CD4-positive, alpha-beta memory T cell (primary cell): ENCODE measurements at regions of chr2 and their contacts with region 1.

Region 1: GRCh38 chr2:181466661-181467576 is 9.7 kb downstream of the ITGA4 start:
- DNase-seq: peak; percentile 65 to 75 (median 68)
- H3K4me3 ChIP-seq: no peak overlapping the region
- H3K4me3 Mint-ChIP-seq: peak overlapping the region; percentile 55 to 77 (median 64)
- H3K27ac ChIP-seq: peak overlapping the region; percentile 56
- H3K27ac Mint-ChIP-seq: peak overlapping the region; percentile 87 to 96 (median 93)
- H3K4me1 ChIP-seq: peaks cover 86% of the 10 kb centered on the region
- H3K4me1 Mint-ChIP-seq: peaks cover 66 to 91% (median 71%) of the 10 kb centered on the region in 4 donors
- H3K27me3 ChIP-seq: no peaks in the 10 kb centered on the region
- H3K27me3 Mint-ChIP-seq: no peaks in the 10 kb centered on the region

Region 2: GRCh38 chr2:180125245-180125962 is 1341.5 kb before region 1 on chr2:
- CTCF ChIA-PET with region 1: no interaction called
- POLR2A ChIA-PET with region 1: no interaction called
- intact Hi-C with region 1: loop called (anchors 1 kb)
- DNase-seq: peak; percentile 28 to 44 (median 38)
- H3K4me3 ChIP-seq: no peak overlapping the region
- H3K4me3 Mint-ChIP-seq: peak overlapping the region in 1 of 8 donors; percentile 29
- H3K27ac ChIP-seq: no peak overlapping the region
- H3K27ac Mint-ChIP-seq: no peak overlapping the region
- H3K4me1 ChIP-seq: no peaks in the 10 kb centered on the region
- H3K4me1 Mint-ChIP-seq: peaks cover 0 to 7% (median 4%) of the 10 kb centered on the region in 4 donors
- H3K27me3 ChIP-seq: no peaks in the 10 kb centered on the region
- H3K27me3 Mint-ChIP-seq: peaks cover 0 to 7% of the 10 kb centered on the region in 2 donors

Region 3: DNA sequence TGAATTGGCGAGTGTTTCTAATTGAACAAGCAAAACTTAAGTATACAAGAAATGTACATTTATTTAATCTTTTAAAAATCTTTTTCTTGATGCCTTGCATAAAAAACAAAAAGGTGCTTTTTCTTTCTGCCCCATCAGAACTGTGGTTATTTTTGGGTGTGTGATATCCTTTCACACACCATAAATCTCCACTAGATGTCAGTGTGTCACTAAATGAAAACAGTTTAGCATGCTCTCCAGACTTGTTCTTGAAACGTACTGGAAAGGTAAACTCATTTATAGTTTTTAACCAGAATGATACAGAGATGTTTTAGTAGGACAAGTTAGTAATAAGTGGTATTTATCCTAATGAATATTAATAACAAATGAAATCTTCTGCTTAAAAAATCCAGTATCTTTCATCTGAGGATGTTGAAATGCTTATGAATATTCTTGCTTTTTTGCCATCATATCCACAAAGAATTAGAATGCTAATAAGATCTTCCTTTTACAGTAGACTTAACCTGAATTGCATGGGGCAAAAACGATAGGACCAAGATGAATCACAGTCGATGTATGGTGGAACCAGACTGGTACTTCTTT is 389.7 kb before region 1 on chr2:
- CTCF ChIA-PET with region 1: interaction called, 3 read pairs
- POLR2A ChIA-PET with region 1: no interaction called
- intact Hi-C with region 1: loop called (anchors 1 kb)
- DNase-seq: peak; percentile 36 to 69 (median 65)
- H3K4me3 ChIP-seq: no peak overlapping the region
- H3K4me3 Mint-ChIP-seq: no peak overlapping the region
- H3K27ac ChIP-seq: no peak overlapping the region
- H3K27ac Mint-ChIP-seq: no peak overlapping the region
- H3K4me1 ChIP-seq: no peaks in the 10 kb centered on the region
- H3K4me1 Mint-ChIP-seq: peaks cover 0 to 3% (median 2%) of the 10 kb centered on the region in 4 donors
- H3K27me3 ChIP-seq: no peaks in the 10 kb centered on the region
- H3K27me3 Mint-ChIP-seq: peaks cover 0 to 2% of the 10 kb centered on the region in 2 donors

Region 4: DNA sequence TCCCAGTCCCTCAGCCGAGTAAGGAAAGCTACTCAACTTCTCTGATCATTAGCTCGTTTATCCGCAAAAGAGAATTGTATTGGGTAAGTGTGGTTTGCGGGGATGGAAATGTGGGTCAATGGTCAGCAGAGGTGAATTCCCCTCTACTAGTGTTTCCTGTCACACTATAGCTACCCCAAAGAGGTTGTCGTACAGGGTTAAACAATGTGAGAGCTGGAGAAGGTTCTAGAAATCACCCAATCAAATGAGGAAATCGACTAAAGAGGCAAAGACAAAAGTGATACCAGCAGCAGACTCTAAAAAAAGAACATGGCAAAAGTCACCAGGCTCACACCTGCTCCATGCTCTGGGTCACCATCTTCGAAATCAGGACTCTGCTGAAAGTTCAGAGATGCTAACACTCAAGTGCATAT is 154.4 kb before region 1 on chr2:
- CTCF ChIA-PET with region 1: interaction called, 11 read pairs
- POLR2A ChIA-PET with region 1: interaction called, 374 read pairs
- intact Hi-C with region 1: no loop called
- DNase-seq: peak; percentile 38 to 55 (median 45)
- H3K4me3 ChIP-seq: peak overlapping the region in 1 of 2 donors; percentile 27
- H3K4me3 Mint-ChIP-seq: peak overlapping the region; percentile 12 to 77 (median 71)
- H3K27ac ChIP-seq: peak overlapping the region; percentile 46
- H3K27ac Mint-ChIP-seq: peak overlapping the region; percentile 88 to 97 (median 95)
- H3K4me1 ChIP-seq: peaks cover 75% of the 10 kb centered on the region
- H3K4me1 Mint-ChIP-seq: peaks cover 34 to 56% (median 46%) of the 10 kb centered on the region in 4 donors
- H3K27me3 ChIP-seq: no peaks in the 10 kb centered on the region
- H3K27me3 Mint-ChIP-seq: no peaks in the 10 kb centered on the region

Region 5: DNA sequence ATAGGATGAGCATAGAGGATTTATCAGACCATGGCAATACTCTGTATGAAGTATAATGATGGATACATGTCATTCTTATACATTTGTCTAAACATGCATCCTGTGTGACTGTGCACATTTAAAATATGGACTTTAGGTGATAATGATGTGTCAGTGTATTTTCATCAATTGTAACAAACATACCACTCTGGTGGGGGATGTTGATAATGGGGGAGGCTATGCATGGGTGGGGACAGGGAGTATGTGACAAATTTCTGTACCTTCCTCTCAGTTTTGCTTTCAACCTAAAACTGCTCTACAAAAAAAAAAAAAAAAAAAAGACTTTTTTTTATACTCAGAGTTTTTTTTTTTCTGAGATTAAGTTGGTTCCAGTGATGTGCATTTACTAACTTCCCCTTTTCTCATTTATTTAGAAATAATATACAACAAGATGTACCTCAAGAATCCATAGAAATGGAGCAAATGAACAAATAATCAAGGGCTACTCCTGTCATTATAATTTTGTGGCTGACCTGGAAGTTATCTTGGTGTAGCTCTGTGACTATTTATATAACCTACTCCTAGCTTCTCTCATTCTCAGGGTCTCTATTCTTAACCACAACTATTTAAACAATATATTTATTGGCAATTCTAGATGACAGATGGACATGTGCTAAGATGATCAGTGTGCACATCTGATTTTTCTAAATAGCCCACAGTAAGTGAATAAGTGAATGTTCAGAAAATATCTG is 118.6 kb before region 1 on chr2:
- CTCF ChIA-PET with region 1: no interaction called
- POLR2A ChIA-PET with region 1: no interaction called
- intact Hi-C with region 1: no loop called
- DNase-seq: no peak
- H3K4me3 ChIP-seq: no peak overlapping the region
- H3K4me3 Mint-ChIP-seq: no peak overlapping the region
- H3K27ac ChIP-seq: no peak overlapping the region
- H3K27ac Mint-ChIP-seq: no peak overlapping the region
- H3K4me1 ChIP-seq: no peaks in the 10 kb centered on the region
- H3K4me1 Mint-ChIP-seq: peaks cover 0 to 5% (median 2%) of the 10 kb centered on the region in 4 donors
- H3K27me3 ChIP-seq: no peaks in the 10 kb centered on the region
- H3K27me3 Mint-ChIP-seq: no peaks in the 10 kb centered on the region

Region 6: GRCh38 chr2:181430406-181431118 is 36.4 kb before region 1 on chr2:
- CTCF ChIA-PET with region 1: interaction called, 35 read pairs
- POLR2A ChIA-PET with region 1: interaction called, 3 read pairs
- intact Hi-C with region 1: loop called (anchors 2 kb)
- DNase-seq: peak; percentile 34 to 53 (median 42)
- H3K4me3 ChIP-seq: no peak overlapping the region
- H3K4me3 Mint-ChIP-seq: peak overlapping the region in 1 of 8 donors; percentile 23
- H3K27ac ChIP-seq: no peak overlapping the region
- H3K27ac Mint-ChIP-seq: peak overlapping the region; percentile 38 to 85 (median 74)
- H3K4me1 ChIP-seq: peaks cover 13% of the 10 kb centered on the region
- H3K4me1 Mint-ChIP-seq: peaks cover 7 to 16% (median 12%) of the 10 kb centered on the region in 4 donors
- H3K27me3 ChIP-seq: no peaks in the 10 kb centered on the region
- H3K27me3 Mint-ChIP-seq: no peaks in the 10 kb centered on the region

Region 7: GRCh38 chr2:181438261-181438660 is 28.7 kb before region 1 on chr2:
- CTCF ChIA-PET with region 1: interaction called, 35 read pairs
- POLR2A ChIA-PET with region 1: no interaction called
- intact Hi-C with region 1: loop called (anchors 1 kb)
- DNase-seq: peak in 1 of 5 donors; percentile 34
- H3K4me3 ChIP-seq: no peak overlapping the region
- H3K4me3 Mint-ChIP-seq: no peak overlapping the region
- H3K27ac ChIP-seq: no peak overlapping the region
- H3K27ac Mint-ChIP-seq: no peak overlapping the region
- H3K4me1 ChIP-seq: peaks cover 10% of the 10 kb centered on the region
- H3K4me1 Mint-ChIP-seq: peaks cover 6 to 14% (median 11%) of the 10 kb centered on the region in 4 donors
- H3K27me3 ChIP-seq: no peaks in the 10 kb centered on the region
- H3K27me3 Mint-ChIP-seq: no peaks in the 10 kb centered on the region

Region 8: GRCh38 chr2:181715033-181715630 is 248.2 kb after region 1 on chr2:
- CTCF ChIA-PET with region 1: interaction called, 5 read pairs
- POLR2A ChIA-PET with region 1: no interaction called
- intact Hi-C with region 1: loop called (anchors 5 kb)
- DNase-seq: peak; percentile 51 to 68 (median 58)
- H3K4me3 ChIP-seq: no peak overlapping the region
- H3K4me3 Mint-ChIP-seq: no peak overlapping the region
- H3K27ac ChIP-seq: no peak overlapping the region
- H3K27ac Mint-ChIP-seq: no peak overlapping the region
- H3K4me1 ChIP-seq: no peaks in the 10 kb centered on the region
- H3K4me1 Mint-ChIP-seq: no peaks in the 10 kb centered on the region
- H3K27me3 ChIP-seq: no peaks in the 10 kb centered on the region
- H3K27me3 Mint-ChIP-seq: peaks cover 0 to 3% of the 10 kb centered on the region in 2 donors